Head of caudate nucleus (tissue), 42 donors: ENCODE measurements at regions of chr11 and their contacts with region 1.

Region 1: DNA sequence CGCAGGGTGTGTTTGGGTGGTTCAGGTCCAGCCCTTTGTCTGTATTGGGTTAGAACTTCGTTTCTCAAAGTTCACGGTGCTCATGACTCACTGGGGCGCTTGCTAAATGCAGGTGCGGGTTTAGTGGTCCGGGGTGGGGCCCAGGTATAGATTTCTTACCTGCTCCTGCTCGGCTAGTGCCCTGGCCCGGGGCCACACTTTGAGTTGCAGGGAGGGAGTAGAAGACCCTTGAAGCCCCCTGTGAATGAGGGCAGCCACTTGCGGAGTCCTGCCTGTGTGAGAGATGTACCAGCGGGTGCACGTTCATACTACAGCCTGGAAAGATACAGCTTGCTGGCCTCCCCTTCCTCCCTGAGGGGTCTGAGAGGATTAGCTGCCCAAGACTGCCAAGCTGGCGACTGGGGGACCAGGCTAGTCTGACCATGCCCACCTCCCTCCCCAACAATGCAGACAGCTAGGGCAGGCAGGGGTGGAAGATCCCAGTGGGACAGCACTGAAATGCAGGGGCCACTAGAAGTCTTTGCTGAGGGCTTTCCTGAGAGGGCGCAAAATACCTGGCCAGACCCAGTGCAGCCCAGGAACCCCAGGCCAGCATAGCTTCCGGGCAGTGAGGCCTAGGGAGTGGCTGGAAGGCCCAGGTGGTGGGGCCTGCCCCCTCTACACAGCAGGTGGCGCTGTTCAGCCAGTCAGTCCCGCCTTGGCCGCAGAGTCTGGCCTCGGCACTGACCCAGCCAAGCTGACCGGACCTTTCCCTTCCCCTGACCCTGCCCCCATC is 5.1 kb upstream of the MYRF start:
- DNase-seq: peak; percentile 73 to 97 (median 90)

Region 2: DNA sequence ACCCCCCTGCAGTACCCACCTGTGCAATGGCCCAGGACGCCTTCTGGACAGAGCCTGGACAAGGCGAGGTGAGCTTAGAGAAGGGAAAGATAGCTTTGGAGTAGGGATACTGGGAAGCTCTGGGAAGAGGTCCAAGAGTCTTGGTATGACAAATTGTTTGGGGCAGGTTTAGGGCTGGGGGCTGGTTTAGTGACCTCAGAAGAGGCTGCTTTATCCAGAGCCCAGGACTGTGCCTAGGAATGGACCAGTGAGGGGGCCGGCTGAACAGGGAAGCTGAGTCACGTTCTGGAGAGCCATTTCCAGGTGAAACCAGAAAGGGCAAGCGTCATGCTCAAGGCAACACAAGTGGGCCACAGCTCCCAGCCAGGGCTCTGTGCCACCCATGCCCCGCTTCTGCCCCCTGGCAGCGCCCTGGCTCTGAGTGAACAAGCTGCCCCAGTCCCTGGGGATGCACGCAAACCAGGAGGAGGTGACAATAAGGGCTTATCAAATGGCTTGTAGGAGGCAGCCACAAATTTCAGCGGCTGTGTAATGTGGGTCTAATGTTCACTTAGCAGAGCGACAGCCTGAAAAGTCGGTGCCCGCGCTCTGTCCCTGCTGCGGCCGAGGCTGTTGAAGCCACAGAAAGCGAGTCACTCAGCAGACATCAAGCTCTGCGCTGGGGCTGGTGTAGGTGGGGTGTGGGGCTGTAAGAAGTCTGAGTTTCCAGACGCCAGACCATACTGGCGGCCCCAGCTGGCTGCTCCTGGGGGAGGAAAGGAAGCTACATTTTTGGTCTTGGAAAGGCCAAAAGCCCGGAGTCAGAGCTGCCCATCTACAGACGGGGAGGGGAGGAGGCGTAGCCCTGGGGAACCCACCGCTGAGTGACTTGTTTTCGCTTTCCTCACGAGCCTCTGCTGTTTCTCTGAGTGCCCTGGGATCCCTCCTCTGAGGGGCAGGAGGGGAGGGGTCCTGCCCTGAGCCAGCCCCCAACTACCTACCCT is 148.2 kb before region 1 on chr11:
- intact Hi-C with region 1: no loop called
- DNase-seq: peak in 3 of 42 donors; percentile 30 to 52 (median 42)

Region 3: GRCh38 chr11:61695917-61696316 is 51.5 kb before region 1 on chr11:
- intact Hi-C with region 1: no loop called
- DNase-seq: peak; percentile 39 to 92 (median 80)

Region 4: DNA sequence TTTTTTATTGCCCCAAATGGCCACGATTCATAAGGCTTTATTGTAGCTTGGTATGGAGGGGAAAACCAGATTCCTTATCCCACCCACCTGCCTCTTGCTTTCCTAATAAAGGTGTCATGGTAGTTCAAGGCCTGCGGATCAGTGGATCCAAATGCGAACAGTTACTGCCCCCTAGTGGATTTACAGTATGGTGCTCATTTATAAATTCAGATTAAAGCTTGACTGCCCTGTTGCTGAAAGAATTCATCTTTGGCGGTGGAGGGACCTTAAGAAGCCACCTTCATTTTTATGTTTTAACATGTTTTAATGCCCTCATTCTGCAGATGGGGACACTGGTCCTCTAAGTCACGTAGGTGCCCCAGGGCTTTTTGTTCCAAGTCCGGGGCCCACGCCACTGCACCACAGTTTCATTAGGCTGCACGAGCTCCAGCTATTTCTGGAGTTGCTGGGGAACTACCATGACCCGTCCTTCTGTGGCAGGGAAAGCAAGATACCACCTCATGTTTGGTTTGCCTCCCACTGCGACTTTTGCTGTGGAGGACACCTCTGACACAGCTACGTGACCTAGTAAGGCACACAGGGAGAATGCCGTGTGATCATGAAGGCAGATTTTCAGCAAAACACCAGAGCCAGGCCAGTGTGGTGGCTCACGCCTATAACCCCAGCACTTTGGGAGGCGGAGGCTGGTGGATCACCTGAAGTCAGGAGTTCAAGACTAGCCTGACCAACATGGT is 360.8 kb after region 1 on chr11:
- intact Hi-C with region 1: loop called (anchors 5 kb)
- DNase-seq: peak in 25 of 42 donors; percentile 19 to 79 (median 52)